CD4-positive, alpha-beta memory T cell (primary cell): ENCODE measurements at regions of chr6 and their contacts with region 1.

Region 1: DNA sequence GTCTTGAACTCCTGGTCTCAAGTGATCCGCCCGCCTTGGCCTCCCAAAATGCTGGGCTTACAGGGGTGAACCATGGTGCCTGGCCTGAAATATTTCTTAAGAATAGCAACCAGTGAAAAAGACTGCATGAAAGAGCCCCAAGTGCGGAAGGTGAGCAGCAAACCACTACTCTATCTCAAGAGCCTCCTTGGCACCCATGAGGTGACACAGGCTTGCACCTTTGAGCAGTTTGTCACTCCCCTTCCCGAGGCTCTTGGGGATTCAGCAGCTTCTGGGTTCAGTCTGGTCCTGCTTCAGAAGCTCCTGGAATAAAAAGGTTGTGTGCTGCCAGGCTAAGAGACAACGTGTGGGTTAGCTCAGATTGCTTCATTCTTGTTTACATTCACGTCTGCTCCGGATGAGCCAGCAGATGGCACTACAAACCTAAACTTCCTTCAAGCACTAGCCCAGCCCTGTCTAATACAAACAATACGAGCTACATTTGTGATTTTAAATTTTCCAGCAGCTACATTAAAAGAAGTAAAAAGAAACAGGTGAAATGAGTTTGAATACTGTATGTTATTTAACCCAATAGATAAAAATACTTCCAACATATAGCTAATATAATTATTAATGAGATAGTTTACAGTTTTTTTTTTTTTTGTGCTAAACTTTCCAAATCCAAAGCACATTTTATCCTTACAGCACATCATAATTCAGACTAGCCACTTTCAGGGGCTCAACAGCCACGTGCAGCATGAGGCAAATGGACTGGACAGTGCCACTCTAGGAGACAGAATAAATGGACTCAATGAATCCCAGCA is 46.2 kb downstream of the GJA10 start:
- DNase-seq: peak; percentile 70 to 78 (median 71)
- H3K4me3 ChIP-seq: no peak overlapping the region
- H3K4me3 Mint-ChIP-seq: no peak overlapping the region
- H3K27ac ChIP-seq: no peak overlapping the region
- H3K27ac Mint-ChIP-seq: peak overlapping the region in 6 of 7 donors; percentile 5 to 67 (median 40)
- H3K4me1 ChIP-seq: peaks cover 7% of the 10 kb centered on the region
- H3K4me1 Mint-ChIP-seq: peaks cover 10 to 30% (median 17%) of the 10 kb centered on the region in 4 donors
- H3K27me3 ChIP-seq: no peaks in the 10 kb centered on the region
- H3K27me3 Mint-ChIP-seq: no peaks in the 10 kb centered on the region

Region 2: GRCh38 chr6:89829591-89830385 is 110.6 kb before region 1 on chr6 and contains the start of gene CASP8AP2:
- CTCF ChIA-PET with region 1: interaction called, 11 read pairs
- POLR2A ChIA-PET with region 1: no interaction called
- intact Hi-C with region 1: loop called (anchors 10 kb)
- DNase-seq: peak; percentile 93 to 98 (median 98)
- H3K4me3 ChIP-seq: peak within 1 kb of the TSS; percentile 85 to 86
- H3K4me3 Mint-ChIP-seq: peak within 1 kb of the TSS; percentile 98 to 100 (median 99)
- H3K27ac ChIP-seq: peak within 1 kb of the TSS; percentile 74
- H3K27ac Mint-ChIP-seq: peak within 1 kb of the TSS; percentile 79 to 99 (median 97)
- H3K4me1 ChIP-seq: peaks cover 32% of the 10 kb centered on the region
- H3K4me1 Mint-ChIP-seq: peaks cover 17 to 52% (median 37%) of the 10 kb centered on the region in 4 donors
- H3K27me3 ChIP-seq: no peaks in the 10 kb centered on the region
- H3K27me3 Mint-ChIP-seq: no peaks in the 10 kb centered on the region
- total RNA-seq, gene CASP8AP2: 59.4 to 61.7 TPM

Region 3: DNA sequence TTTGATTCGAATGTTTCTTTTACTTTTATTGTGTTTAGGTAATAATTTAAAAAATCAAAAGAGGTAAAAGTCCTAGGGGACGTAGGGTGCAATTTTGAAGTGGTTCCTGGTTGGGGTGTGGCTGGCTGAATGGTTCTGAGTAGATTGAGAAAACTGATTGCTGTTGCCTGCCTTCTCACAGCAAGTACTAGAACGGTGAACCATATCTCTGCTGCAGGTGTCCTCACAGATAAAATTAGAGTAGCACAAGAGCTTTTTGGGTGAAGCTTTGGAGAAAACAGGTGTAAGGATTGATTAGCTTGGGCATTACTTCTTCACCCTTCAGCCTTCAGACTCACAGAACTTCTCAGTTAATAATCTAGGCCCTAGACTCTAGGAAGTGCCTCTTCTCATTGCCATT is 66.0 kb before region 1 on chr6:
- CTCF ChIA-PET with region 1: no interaction called
- POLR2A ChIA-PET with region 1: no interaction called
- intact Hi-C with region 1: no loop called
- DNase-seq: no peak
- H3K4me3 ChIP-seq: no peak overlapping the region
- H3K4me3 Mint-ChIP-seq: no peak overlapping the region
- H3K27ac ChIP-seq: no peak overlapping the region
- H3K27ac Mint-ChIP-seq: peak overlapping the region in 4 of 7 donors; percentile 1 to 35 (median 21)
- H3K4me1 ChIP-seq: no peaks in the 10 kb centered on the region
- H3K4me1 Mint-ChIP-seq: peaks cover 0 to 4% (median 3%) of the 10 kb centered on the region in 4 donors
- H3K27me3 ChIP-seq: no peaks in the 10 kb centered on the region
- H3K27me3 Mint-ChIP-seq: no peaks in the 10 kb centered on the region

Region 4: DNA sequence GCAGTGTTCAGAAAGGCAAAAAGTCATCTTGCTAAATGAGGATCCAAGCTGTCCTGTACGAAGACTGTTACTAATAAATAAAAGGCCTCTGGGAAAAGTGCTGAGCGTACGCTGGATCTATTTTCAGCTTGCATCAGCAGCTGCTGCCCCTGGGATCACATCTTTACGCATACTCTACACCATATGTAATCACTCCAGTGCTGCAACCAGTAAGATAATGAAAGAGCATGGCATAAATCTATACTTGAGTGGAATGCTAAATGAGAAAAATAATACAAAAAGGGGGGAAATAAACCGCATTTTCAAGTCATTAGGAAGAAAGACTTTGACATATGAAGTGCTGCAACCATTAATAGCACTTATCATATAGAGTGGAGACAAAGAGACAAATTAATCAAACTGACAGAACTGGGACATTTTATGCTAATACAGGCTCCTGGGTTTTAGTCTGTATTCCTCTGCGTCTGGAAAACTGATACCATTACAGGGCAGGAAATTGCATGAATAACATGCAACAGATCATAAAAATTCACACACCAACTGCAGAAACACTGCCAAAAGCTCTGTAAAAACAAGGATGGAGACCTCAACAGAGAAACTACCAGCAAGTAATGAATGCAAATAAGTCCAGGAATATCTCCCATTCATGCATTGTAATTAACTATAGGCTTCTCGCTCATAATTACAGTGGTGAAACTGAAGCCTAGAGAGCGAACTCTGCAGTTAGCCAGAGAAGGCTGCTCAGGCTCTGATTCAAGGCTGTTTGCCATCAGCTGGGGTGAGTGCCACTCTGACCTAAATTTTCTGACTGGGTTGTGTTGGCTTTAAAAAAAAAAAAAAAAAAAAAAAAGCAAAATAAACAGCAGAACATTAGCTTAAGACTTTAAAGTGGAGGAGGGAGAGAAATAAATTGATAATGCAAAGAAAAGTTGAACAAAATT is 37.7 kb after region 1 on chr6:
- CTCF ChIA-PET with region 1: interaction called, 16 read pairs
- POLR2A ChIA-PET with region 1: no interaction called
- intact Hi-C with region 1: no loop called
- DNase-seq: no peak
- H3K4me3 ChIP-seq: no peak overlapping the region
- H3K4me3 Mint-ChIP-seq: no peak overlapping the region
- H3K27ac ChIP-seq: no peak overlapping the region
- H3K27ac Mint-ChIP-seq: no peak overlapping the region
- H3K4me1 ChIP-seq: peaks cover 7% of the 10 kb centered on the region
- H3K4me1 Mint-ChIP-seq: peaks cover 11 to 24% (median 17%) of the 10 kb centered on the region in 4 donors
- H3K27me3 ChIP-seq: no peaks in the 10 kb centered on the region
- H3K27me3 Mint-ChIP-seq: no peaks in the 10 kb centered on the region

Region 5: DNA sequence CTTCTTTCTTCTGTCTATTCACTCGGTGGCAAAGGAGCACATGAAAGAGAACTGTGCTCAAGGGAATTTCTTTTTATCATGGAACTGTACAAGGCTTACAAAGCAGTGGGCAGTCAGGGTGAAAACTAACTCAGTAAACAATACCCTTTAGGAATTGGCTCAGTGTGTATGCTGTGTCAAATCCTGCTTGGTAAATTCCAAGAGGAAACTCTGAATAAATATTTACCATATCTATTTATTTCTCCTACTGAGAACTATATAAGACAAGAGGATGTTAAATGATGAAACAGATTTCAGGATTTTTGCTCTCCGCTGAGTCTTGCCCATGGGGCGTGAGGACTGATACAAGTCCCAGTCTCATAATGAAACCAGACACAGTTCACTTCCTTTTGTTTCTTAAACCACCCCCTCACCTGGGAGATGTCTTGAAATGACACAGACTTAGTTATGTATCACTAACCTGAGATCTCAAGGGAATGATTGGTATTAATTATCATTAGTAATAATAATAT is 167.4 kb after region 1 on chr6:
- CTCF ChIA-PET with region 1: interaction called, 27 read pairs
- POLR2A ChIA-PET with region 1: no interaction called
- intact Hi-C with region 1: loop called (anchors 1 kb)
- DNase-seq: peak in 1 of 5 donors; percentile 21
- H3K4me3 ChIP-seq: no peak overlapping the region
- H3K4me3 Mint-ChIP-seq: peak overlapping the region in 5 of 8 donors; percentile 35 to 74 (median 60)
- H3K27ac ChIP-seq: no peak overlapping the region
- H3K27ac Mint-ChIP-seq: peak overlapping the region in 4 of 7 donors; percentile 15 to 67 (median 22)
- H3K4me1 ChIP-seq: peaks cover 78% of the 10 kb centered on the region
- H3K4me1 Mint-ChIP-seq: peaks cover 57 to 96% (median 73%) of the 10 kb centered on the region in 4 donors
- H3K27me3 ChIP-seq: no peaks in the 10 kb centered on the region
- H3K27me3 Mint-ChIP-seq: no peaks in the 10 kb centered on the region

Region 6: DNA sequence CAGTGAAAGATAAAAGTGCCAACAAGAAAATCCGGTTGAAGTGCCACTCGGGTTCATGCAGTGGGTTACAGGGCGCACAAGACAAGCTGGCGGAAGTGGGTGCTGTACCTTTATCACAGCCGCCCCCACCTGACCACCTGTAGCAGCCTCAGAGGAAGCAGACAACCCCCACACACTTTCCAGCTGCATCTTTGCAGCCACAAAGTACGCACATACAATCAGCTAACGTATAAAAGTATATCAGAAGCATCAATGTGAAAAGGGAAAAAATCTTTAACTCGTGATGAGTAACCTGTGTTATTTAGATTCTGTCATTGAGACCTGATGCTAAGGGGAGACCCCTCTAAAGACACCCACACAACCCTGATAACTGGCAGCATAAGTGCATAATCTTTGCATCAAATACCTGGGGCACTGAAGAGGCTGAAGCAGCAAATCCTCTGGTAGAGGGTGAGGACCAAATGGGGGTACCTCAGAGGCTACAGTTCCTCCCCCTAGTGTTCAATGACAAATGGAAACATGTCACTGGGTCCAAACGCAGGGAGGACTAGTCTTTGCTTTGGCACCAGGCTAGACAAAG is 334.1 kb after region 1 on chr6:
- CTCF ChIA-PET with region 1: interaction called, 14 read pairs
- POLR2A ChIA-PET with region 1: no interaction called
- intact Hi-C with region 1: loop called (anchors 2 kb)
- DNase-seq: peak; percentile 93 to 99 (median 97)
- H3K4me3 ChIP-seq: peak overlapping the region in 1 of 2 donors; percentile 21
- H3K4me3 Mint-ChIP-seq: peak overlapping the region; percentile 60 to 89 (median 79)
- H3K27ac ChIP-seq: peak overlapping the region; percentile 82
- H3K27ac Mint-ChIP-seq: peak overlapping the region; percentile 94 to 100 (median 99)
- H3K4me1 ChIP-seq: peaks cover 50% of the 10 kb centered on the region
- H3K4me1 Mint-ChIP-seq: peaks cover 51 to 80% (median 67%) of the 10 kb centered on the region in 4 donors
- H3K27me3 ChIP-seq: no peaks in the 10 kb centered on the region
- H3K27me3 Mint-ChIP-seq: no peaks in the 10 kb centered on the region

Region 7: GRCh38 chr6:90393232-90393884 is 452.9 kb after region 1 on chr6:
- CTCF ChIA-PET with region 1: interaction called, 48 read pairs
- POLR2A ChIA-PET with region 1: interaction called, 5 read pairs
- intact Hi-C with region 1: loop called (anchors 1 kb)
- DNase-seq: peak; percentile 73 to 75 (median 73)
- H3K4me3 ChIP-seq: no peak overlapping the region
- H3K4me3 Mint-ChIP-seq: peak overlapping the region in 2 of 8 donors; percentile 23 to 24
- H3K27ac ChIP-seq: no peak overlapping the region
- H3K27ac Mint-ChIP-seq: peak overlapping the region in 4 of 7 donors; percentile 5 to 72 (median 38)
- H3K4me1 ChIP-seq: peaks cover 30% of the 10 kb centered on the region
- H3K4me1 Mint-ChIP-seq: peaks cover 22 to 40% (median 27%) of the 10 kb centered on the region in 4 donors
- H3K27me3 ChIP-seq: no peaks in the 10 kb centered on the region
- H3K27me3 Mint-ChIP-seq: no peaks in the 10 kb centered on the region